ENCODE measurements at regions of chr10 and their contacts with region 1.

Region 1: GRCh38 chr10:24483489-24484100 is 240.1 kb downstream of the ARHGAP21 start:
- DNase-seq: peak; percentile 74
- ATAC-seq: peak; percentile 100
- H3K4me3 ChIP-seq: peak overlapping the region in 1 of 2 experiments; percentile 48; a peak in 2 of 4 replicates
- H3K27ac ChIP-seq: peak overlapping the region; percentile 33
- H3K4me1 ChIP-seq: peaks cover 13 to 20% of the 10 kb centered on the region in 2 experiments
- H3K27me3 ChIP-seq: no peaks in the 10 kb centered on the region
- CTCF ChIP-seq: no peak
- POLR2A ChIP-seq: no peak
- RAD21 ChIP-seq: no peak

Region 2: DNA sequence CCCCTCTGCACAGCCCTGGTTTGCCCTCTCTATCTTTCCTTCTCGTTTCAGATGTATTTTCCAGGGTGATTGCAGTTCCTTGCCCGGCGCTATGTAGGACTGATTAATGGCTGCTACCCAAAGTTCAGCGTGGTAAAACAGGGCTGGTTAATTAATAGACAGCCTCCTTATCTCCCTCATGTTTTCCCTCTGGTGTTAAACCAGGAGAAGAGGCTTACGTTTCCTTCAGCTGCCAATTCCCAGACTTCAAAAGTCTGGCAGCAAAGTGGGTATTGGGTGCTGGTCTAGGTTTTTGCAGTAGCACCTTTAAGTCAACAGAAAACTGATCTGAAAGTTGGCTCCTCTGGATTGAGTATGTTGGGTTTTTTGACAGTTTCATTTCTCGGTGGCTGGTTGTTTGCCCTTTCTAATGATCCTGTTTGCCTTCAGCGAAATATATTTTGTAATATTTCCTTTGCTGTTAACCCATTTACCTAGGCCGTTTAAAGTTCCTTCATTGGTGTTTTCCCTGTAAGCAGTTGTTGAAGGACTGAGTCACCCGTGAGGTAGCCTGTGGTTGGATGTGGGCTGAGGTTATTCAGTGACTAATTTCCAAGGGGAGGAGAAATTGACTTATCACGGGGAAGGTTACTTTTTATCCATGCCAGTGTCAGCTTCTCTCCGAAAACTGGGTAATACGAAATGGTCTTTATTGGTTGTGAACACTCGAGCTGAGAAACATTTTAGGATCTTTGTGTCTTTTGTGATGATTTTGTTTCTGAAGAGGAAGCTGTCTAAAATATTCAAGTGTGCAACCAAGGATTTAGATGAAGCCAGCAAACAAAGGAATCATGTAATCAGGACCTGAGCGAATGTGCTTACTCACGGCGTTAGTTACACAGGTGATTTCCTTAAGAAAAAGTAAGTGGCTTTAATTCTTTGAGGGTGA is 17.4 kb before region 1 on chr10:
- CTCF ChIA-PET with region 1: interaction called, 3 read pairs
- POLR2A ChIA-PET with region 1: no interaction called
- RAD21 ChIA-PET with region 1: no interaction called
- intact Hi-C with region 1: loop called (anchors 2 kb)
- DNase-seq: peak; percentile 77
- ATAC-seq: peak; percentile 94
- H3K4me3 ChIP-seq: peak overlapping the region; percentile 49 to 59
- H3K27ac ChIP-seq: peak overlapping the region; percentile 25; the same call in 1 of the 2 replicates
- H3K4me1 ChIP-seq: peaks cover 7 to 27% of the 10 kb centered on the region in 2 experiments; a peak in 3 of 4 replicates
- H3K27me3 ChIP-seq: no peaks in the 10 kb centered on the region
- CTCF ChIP-seq: no peak
- POLR2A ChIP-seq: no peak
- RAD21 ChIP-seq: no peak

Measured in HCT116 (cell line).